ENCODE measurements at regions of chr18 and their contacts with region 1.

Region 1: DNA sequence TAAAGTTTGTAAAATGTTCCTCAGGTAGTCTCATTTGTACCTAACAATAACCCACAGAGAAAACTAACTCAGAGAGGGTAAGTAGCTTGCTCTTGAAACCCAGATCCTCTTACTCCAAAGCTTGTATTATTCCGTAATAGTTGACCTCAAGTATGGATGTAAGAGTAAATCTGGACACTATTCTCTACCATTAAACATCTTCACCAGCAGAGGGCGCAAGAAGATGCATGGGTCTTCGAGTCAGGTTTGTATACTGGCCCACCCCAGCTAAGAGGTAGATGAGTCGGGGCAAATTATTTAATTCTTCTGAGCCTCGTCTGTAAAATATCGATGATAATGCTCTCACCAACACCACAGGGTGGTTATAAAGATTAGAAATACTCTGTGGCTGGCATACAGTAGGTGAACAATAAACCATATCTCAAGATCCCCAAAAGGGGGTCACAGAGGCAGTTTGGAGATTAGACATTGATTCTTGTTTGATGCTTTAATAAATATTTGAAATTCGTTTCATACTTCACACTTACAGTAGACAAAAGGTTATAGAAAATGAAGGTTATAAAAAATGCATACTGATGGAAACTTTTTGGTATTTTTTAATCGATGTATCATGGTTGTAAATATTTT is 3.5 kb upstream of the CABLES1 start:
- DNase-seq: peak; percentile 78
- H3K4me3 ChIP-seq: no peak overlapping the region
- H3K27ac ChIP-seq: no peak overlapping the region
- H3K4me1 ChIP-seq: peaks cover 0 to 18% (median 16%) of the 10 kb centered on the region in 4 donors
- H3K27me3 ChIP-seq: peaks cover 0 to 15% (median 0%) of the 10 kb centered on the region in 3 donors
- CTCF ChIP-seq: peak; percentile 59 to 79 (median 68)
- EP300 ChIP-seq: no peak
- POLR2A ChIP-seq: no peak

Region 2: DNA sequence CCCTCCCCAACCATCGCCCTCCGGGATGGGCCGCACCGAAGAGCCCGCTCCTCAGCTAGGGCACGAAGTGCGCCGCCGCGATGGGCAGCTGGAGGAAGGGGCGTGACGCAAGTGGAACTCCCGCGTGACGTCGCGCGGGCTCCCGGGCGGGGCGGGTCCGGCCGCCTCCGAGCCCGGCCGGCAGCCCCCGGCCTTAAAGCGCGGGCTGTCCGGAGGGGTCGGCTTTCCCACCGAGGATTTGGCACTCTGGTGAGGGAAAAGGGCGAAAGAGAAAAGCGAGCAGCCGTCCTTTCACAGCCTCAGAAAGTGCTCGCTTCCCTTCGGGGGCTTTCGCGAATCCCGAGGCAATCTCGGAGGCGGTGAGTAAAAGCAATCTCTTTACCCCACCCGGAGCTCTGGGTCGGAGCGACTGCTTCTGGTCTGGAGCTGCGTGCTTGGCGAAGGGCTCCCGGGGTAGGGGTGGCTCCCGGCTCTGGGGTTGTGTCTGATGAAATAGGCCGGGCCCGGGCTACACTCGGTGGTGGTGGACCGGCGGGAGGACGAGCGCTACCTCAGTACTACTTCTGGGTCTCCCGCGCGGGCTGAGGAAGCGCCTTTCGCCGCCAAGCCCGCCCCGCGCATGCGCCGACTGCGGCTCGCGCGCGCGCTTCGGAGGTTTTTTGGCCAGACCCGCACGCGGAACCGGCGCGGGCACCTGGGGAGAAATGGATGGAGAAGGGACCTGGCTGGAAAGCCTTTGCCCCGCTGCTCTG is 198.4 kb before region 1 on chr18 and contains the start of gene RBBP8:
- intact Hi-C with region 1: loop called (anchors 10 kb)
- DNase-seq: peak; percentile 90
- H3K4me3 ChIP-seq: peak within 1 kb of the TSS; percentile 77 to 91 (median 82)
- H3K27ac ChIP-seq: peak within 1 kb of the TSS; percentile 97 to 99 (median 98)
- H3K4me1 ChIP-seq: peaks cover 0 to 12% (median 2%) of the 10 kb centered on the region in 4 donors
- H3K27me3 ChIP-seq: no peaks in the 10 kb centered on the region
- CTCF ChIP-seq: no peak
- EP300 ChIP-seq: no peak
- POLR2A ChIP-seq: peak; percentile 63 to 77
- total RNA-seq, gene RBBP8: 10.3 to 22.7 (median 14.7) TPM

Region 3: DNA sequence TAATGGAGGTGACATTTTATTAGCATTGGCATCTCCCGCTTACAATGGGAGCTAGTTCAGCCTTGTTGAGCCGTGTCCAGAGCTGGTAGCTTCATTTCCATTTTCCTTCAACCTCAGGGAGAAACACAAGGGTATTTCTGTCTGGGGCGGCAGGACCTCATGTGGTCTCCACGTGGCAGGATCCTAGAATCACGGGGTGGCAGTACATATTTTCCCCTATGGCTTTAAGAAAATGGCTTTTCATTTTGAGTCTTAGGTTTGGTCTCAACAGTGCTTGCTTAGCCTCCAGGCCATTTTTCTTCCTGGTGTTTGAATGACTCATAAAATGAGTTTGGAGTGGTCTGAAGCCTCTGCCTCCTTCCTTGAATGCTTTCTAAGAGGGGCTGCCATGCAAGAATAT is 23.7 kb after region 1 on chr18:
- intact Hi-C with region 1: no loop called
- DNase-seq: no peak
- H3K4me3 ChIP-seq: no peak overlapping the region
- H3K27ac ChIP-seq: no peak overlapping the region
- H3K4me1 ChIP-seq: peaks cover 0 to 9% (median 0%) of the 10 kb centered on the region in 4 donors
- H3K27me3 ChIP-seq: no peaks in the 10 kb centered on the region
- CTCF ChIP-seq: no peak
- EP300 ChIP-seq: no peak
- POLR2A ChIP-seq: no peak

Region 4: DNA sequence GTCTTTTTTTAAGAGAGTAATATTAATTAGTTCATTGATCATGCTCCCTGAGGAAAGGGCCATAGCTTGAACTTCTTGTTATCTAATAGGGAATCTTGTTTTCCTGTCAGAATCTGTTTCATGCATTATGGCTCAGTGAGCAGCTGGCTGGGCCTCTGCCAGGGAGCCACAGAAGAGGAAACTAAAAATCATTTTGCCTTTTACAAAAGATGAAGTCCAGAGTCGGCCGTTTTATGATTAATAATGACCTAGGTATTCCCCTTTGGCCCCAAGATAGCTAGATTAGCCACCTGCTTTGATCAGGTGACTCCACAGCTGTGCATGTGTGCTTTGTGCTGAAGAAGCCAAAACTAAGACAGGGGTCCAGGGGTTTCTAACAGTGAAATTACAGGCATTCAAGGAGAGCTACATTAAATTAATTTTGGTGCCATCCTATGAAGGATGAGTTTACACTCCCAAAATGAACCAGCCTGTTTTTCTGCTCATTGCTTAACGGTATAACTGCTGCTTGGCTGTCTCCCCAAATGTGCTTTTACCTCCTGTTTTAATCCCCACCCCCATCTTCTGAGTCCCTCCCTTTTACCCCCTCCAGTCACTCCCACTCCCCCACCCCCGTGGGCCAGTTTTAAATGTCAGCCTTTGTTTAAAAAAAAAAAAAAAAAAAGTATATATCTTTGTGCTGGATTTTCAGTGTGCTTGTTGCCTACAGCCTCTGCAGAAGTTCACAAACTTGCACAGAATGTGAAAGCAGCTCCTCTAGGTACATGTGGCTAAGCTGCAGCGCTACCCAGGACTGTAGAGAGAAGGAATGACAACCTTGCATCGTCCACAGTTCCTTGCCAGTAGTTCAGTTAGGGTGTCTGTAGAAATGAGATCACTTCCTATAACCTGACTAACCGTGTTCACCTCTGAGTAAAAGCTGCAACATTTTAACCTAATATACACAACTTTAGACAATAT is 96.6 kb after region 1 on chr18:
- intact Hi-C with region 1: loop called (anchors 5 kb)
- DNase-seq: no peak
- H3K4me3 ChIP-seq: no peak overlapping the region
- H3K27ac ChIP-seq: peak overlapping the region; percentile 67 to 82 (median 77)
- H3K4me1 ChIP-seq: peaks cover 0 to 61% (median 52%) of the 10 kb centered on the region in 4 donors
- H3K27me3 ChIP-seq: no peaks in the 10 kb centered on the region
- CTCF ChIP-seq: no peak
- EP300 ChIP-seq: no peak
- POLR2A ChIP-seq: no peak

Region 5: GRCh38 chr18:23377669-23378301 is 246.0 kb after region 1 on chr18:
- intact Hi-C with region 1: loop called (anchors 1 kb)
- DNase-seq: no peak
- H3K4me3 ChIP-seq: no peak overlapping the region
- H3K27ac ChIP-seq: peak overlapping the region; percentile 59 to 83 (median 75)
- H3K4me1 ChIP-seq: peaks cover 0 to 20% (median 15%) of the 10 kb centered on the region in 4 donors
- H3K27me3 ChIP-seq: no peaks in the 10 kb centered on the region
- CTCF ChIP-seq: no peak
- EP300 ChIP-seq: no peak
- POLR2A ChIP-seq: no peak

Region 6: DNA sequence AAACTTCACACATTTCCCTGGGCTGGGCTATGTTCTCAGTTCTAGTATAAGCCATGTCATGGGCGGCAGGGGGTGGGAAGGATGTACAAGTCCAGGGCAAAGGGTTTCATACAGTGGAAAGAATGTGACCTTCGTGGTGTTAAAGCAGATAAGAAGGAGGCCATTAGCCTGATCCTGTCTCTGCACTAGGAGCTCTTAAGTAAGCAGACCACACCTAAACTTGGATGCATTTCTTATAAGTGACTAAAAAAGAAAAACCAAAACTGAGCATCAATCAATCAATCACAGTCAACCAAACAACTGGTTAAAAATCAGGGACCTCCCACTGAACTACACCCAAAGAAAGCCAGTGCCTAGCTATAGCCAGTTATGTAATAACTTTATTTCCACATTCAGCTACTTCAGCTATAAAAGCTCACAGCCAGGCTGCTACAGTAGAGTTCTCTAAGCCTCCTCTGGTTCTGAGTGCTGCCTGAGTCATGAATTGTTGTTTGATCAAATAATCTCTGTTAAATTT is 274.5 kb after region 1 on chr18:
- intact Hi-C with region 1: loop called (anchors 1 kb)
- DNase-seq: no peak
- H3K4me3 ChIP-seq: no peak overlapping the region
- H3K27ac ChIP-seq: no peak overlapping the region
- H3K4me1 ChIP-seq: no peaks in the 10 kb centered on the region
- H3K27me3 ChIP-seq: no peaks in the 10 kb centered on the region
- CTCF ChIP-seq: no peak
- EP300 ChIP-seq: no peak
- POLR2A ChIP-seq: no peak

Region 7: GRCh38 chr18:23416298-23416697 is 284.5 kb after region 1 on chr18:
- intact Hi-C with region 1: loop called (anchors 1 kb)
- DNase-seq: no peak
- H3K4me3 ChIP-seq: no peak overlapping the region
- H3K27ac ChIP-seq: no peak overlapping the region
- H3K4me1 ChIP-seq: no peaks in the 10 kb centered on the region
- H3K27me3 ChIP-seq: no peaks in the 10 kb centered on the region
- CTCF ChIP-seq: no peak
- EP300 ChIP-seq: no peak
- POLR2A ChIP-seq: no peak

Region 8: GRCh38 chr18:23433360-23433759 is 301.6 kb after region 1 on chr18:
- intact Hi-C with region 1: no loop called
- DNase-seq: no peak
- H3K4me3 ChIP-seq: no peak overlapping the region
- H3K27ac ChIP-seq: no peak overlapping the region
- H3K4me1 ChIP-seq: peaks cover 0 to 13% (median 11%) of the 10 kb centered on the region in 4 donors
- H3K27me3 ChIP-seq: no peaks in the 10 kb centered on the region
- CTCF ChIP-seq: no peak
- EP300 ChIP-seq: no peak
- POLR2A ChIP-seq: no peak

Region 9: GRCh38 chr18:23503038-23503962 is 371.5 kb after region 1 on chr18 and contains the start of gene RMC1:
- intact Hi-C with region 1: loop called (anchors 5 kb)
- DNase-seq: peak; percentile 98
- H3K4me3 ChIP-seq: peak within 1 kb of the TSS; percentile 66 to 100 (median 98)
- H3K27ac ChIP-seq: peak within 1 kb of the TSS; percentile 89 to 96 (median 94)
- H3K4me1 ChIP-seq: peaks cover 0 to 29% (median 24%) of the 10 kb centered on the region in 4 donors
- H3K27me3 ChIP-seq: no peaks in the 10 kb centered on the region
- CTCF ChIP-seq: no peak
- EP300 ChIP-seq: no peak
- POLR2A ChIP-seq: peak; percentile 70 to 91
- total RNA-seq, gene RMC1: 11.8 to 21.6 (median 17.4) TPM